ENCODE measurements at regions of chr17 and their contacts with region 1.

Region 1: DNA sequence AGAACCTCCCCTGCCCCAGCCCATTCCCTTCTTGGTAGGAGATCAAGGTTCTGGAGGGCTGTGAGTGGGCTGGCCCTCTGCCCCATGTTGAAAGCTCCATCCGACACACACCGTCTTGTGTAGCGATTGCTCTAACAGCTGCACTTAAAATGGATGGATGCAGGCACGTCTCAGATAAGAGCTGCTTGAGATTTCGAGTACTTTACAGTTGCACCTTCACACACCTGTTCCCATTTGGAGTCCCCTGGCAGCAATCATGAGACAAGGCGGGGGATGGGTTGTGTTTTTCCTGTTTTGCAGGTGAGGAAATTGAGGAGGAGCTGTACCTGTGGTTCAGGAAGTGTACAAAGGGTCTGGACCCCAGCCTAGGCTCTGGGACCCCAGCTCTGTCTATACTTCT is 25.6 kb upstream of the TAC4 start:
- DNase-seq: no peak
- ATAC-seq: no peak
- H3K4me3 ChIP-seq: no peak overlapping the region
- H3K27ac ChIP-seq: no peak overlapping the region
- H3K4me1 ChIP-seq: no peaks in the 10 kb centered on the region
- H3K27me3 ChIP-seq: no peaks in the 10 kb centered on the region
- CTCF ChIP-seq: no peak

Region 2: GRCh38 chr17:49944273-49944890 is 70.9 kb after region 1 on chr17:
- CTCF ChIA-PET with region 1: interaction called, 12 read pairs
- POLR2A ChIA-PET with region 1: no interaction called
- in situ Hi-C with region 1: no loop called
- intact Hi-C with region 1: no loop called
- DNase-seq: no peak
- ATAC-seq: no peak
- H3K4me3 ChIP-seq: no peak overlapping the region
- H3K27ac ChIP-seq: no peak overlapping the region
- H3K4me1 ChIP-seq: no peaks in the 10 kb centered on the region
- H3K27me3 ChIP-seq: no peaks in the 10 kb centered on the region
- CTCF ChIP-seq: no peak